SK-N-SH (cell line): ENCODE measurements at regions of chr9 and their contacts with region 1.

Region 1: GRCh38 chr9:97615439-97616072 is 17.6 kb downstream of the TSTD2 start:
- DNase-seq: peak; percentile 61
- H3K4me3 ChIP-seq: no peak overlapping the region
- H3K27ac ChIP-seq: no peak overlapping the region; a peak in 1 of 4 replicates
- H3K4me1 ChIP-seq: no peaks in the 10 kb centered on the region
- H3K27me3 ChIP-seq: no peaks in the 10 kb centered on the region
- CTCF ChIP-seq: peak; percentile 85
- EP300 ChIP-seq: no peak
- RAD21 ChIP-seq: peak; percentile 87

Region 2: GRCh38 chr9:97459099-97459725 is 156.3 kb before region 1 on chr9:
- CTCF ChIA-PET with region 1: interaction called, 29 read pairs
- POLR2A ChIA-PET with region 1: no interaction called
- DNase-seq: no peak
- H3K4me3 ChIP-seq: no peak overlapping the region
- H3K27ac ChIP-seq: no peak overlapping the region
- H3K4me1 ChIP-seq: no peaks in the 10 kb centered on the region
- H3K27me3 ChIP-seq: no peaks in the 10 kb centered on the region
- CTCF ChIP-seq: no peak
- EP300 ChIP-seq: no peak
- RAD21 ChIP-seq: no peak

Region 3: GRCh38 chr9:97564291-97565175 is 51.0 kb before region 1 on chr9:
- CTCF ChIA-PET with region 1: interaction called, 15 read pairs
- POLR2A ChIA-PET with region 1: no interaction called
- DNase-seq: peak; percentile 83
- H3K4me3 ChIP-seq: peak overlapping the region; percentile 10 to 16; a peak in 2 of 4 replicates
- H3K27ac ChIP-seq: peak overlapping the region in 1 of 2 experiments; percentile 98; a peak in 2 of 4 replicates
- H3K4me1 ChIP-seq: peaks cover 0 to 84% of the 10 kb centered on the region in 2 experiments; a peak in 2 of 4 replicates
- H3K27me3 ChIP-seq: no peaks in the 10 kb centered on the region
- CTCF ChIP-seq: no peak
- EP300 ChIP-seq: peak; percentile 15 to 97; a peak in 3 of 4 replicates
- RAD21 ChIP-seq: peak; percentile 57

Region 4: GRCh38 chr9:97632985-97633858 is 17.7 kb after region 1 on chr9 and contains the starts of genes NCBP1 and TSTD2:
- CTCF ChIA-PET with region 1: interaction called, 41 read pairs
- POLR2A ChIA-PET with region 1: interaction called, 6 read pairs
- DNase-seq: peak; percentile 94
- H3K4me3 ChIP-seq: peak within 1 kb of the TSS; percentile 92 to 99
- H3K27ac ChIP-seq: peak within 1 kb of the TSS; percentile 99 to 100
- H3K4me1 ChIP-seq: peaks cover 19 to 20% of the 10 kb centered on the region in 2 experiments; a peak in 3 of 4 replicates
- H3K27me3 ChIP-seq: no peaks in the 10 kb centered on the region
- CTCF ChIP-seq: no peak
- EP300 ChIP-seq: no peak
- RAD21 ChIP-seq: no peak
- polyA plus RNA-seq, gene NCBP1: 11.3 and 15.6 TPM in 2 replicates
- polyA plus RNA-seq, gene TSTD2: 11.5 and 18.6 TPM in 2 replicates